SK-N-SH (cell line): ENCODE measurements at regions of chr7 and their contacts with region 1.

Region 1: GRCh38 chr7:95229301-95229700 is 95.0 kb downstream of the PON1 start:
- DNase-seq: no peak
- H3K4me3 ChIP-seq: no peak overlapping the region
- H3K27ac ChIP-seq: no peak overlapping the region
- H3K4me1 ChIP-seq: no peaks in the 10 kb centered on the region
- H3K27me3 ChIP-seq: no peaks in the 10 kb centered on the region
- CTCF ChIP-seq: no peak
- EP300 ChIP-seq: no peak
- RAD21 ChIP-seq: no peak

Region 2: DNA sequence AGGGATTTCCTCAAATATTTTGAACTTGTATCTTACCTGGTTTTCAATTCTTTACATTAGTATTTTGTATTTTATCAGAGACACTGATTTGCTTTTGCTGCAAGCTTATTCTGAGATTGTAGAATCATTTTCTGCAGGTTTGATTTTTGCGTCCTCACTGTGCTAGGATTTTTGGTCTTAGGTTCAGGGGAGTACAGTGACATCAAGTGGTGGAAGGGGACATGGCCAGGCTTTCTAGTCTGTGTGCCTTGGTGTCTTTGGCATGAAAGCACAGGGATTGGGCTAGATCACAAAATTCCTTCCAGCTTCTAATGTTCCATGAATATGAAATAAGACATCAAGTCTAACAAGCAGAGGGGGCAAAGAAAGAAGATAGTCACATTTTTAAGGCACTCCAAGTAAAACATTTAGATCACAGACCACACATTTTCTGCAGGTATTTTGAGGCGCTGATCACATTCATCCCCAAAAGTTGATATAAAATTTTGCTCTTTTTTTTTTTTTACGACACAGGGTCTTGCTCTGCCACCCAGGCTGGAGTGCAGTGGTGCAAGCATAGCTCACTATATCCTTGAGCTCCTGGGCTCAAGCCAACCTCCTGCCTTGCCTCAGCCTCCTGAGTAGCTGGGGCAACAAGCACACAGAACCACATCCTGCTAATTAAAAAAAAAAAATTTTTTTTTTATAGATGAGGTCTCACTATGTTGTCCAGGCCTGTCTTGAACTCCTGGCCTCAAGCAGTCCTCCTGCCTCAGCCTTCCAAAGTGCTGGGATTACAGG is 29.3 kb before region 1 on chr7:
- CTCF ChIA-PET with region 1: interaction called, 10 read pairs
- POLR2A ChIA-PET with region 1: no interaction called
- DNase-seq: peak; percentile 69
- H3K4me3 ChIP-seq: no peak overlapping the region; a peak in 1 of 4 replicates
- H3K27ac ChIP-seq: no peak overlapping the region
- H3K4me1 ChIP-seq: peaks cover 0 to 12% of the 10 kb centered on the region in 2 experiments; a peak in 2 of 4 replicates
- H3K27me3 ChIP-seq: peaks cover 7% of the 10 kb centered on the region; the same call in 1 of the 2 replicates
- CTCF ChIP-seq: peak; percentile 82
- EP300 ChIP-seq: no peak
- RAD21 ChIP-seq: peak; percentile 95

Region 3: GRCh38 chr7:95213809-95214492 is 15.3 kb before region 1 on chr7:
- CTCF ChIA-PET with region 1: no interaction called
- POLR2A ChIA-PET with region 1: no interaction called
- DNase-seq: no peak
- H3K4me3 ChIP-seq: no peak overlapping the region
- H3K27ac ChIP-seq: no peak overlapping the region
- H3K4me1 ChIP-seq: no peaks in the 10 kb centered on the region
- H3K27me3 ChIP-seq: no peaks in the 10 kb centered on the region
- CTCF ChIP-seq: no peak
- EP300 ChIP-seq: no peak
- RAD21 ChIP-seq: no peak

Region 4: DNA sequence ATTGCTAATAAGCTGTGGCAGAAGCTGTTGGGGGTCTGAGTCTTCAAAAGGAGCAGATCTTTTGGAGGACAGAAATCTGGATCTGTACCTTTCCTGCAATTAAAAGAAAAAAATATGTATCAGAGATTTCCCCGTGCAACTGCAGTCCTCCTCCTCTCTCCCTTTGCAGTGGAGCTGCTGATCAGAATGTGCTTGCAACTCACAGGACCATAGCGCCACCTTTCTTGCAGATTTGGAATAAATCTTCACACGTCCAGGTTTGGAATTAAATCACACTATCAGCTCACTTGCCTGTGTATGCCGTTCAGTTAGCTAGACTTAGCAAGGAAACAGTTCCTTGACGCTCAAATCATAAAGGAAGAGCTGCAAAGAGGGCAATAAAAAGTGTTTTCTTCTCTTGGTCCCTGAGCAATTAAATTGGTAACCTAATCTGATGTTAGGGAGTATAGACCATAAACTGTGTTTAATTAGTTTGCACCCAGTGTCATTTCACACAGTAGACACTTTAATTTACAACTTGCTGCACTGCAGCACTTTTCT is 17.6 kb after region 1 on chr7:
- CTCF ChIA-PET with region 1: interaction called, 14 read pairs
- POLR2A ChIA-PET with region 1: no interaction called
- DNase-seq: peak; percentile 55
- H3K4me3 ChIP-seq: peak overlapping the region; percentile 21 to 25; a peak in 2 of 4 replicates
- H3K27ac ChIP-seq: no peak overlapping the region
- H3K4me1 ChIP-seq: peaks cover 0 to 4% of the 10 kb centered on the region in 2 experiments; a peak in 2 of 4 replicates
- H3K27me3 ChIP-seq: no peaks in the 10 kb centered on the region
- CTCF ChIP-seq: peak; percentile 84
- EP300 ChIP-seq: no peak
- RAD21 ChIP-seq: peak; percentile 87